PC-3 (cell line): ENCODE measurements at regions of chr5 and their contacts with region 1.

Region 1: DNA sequence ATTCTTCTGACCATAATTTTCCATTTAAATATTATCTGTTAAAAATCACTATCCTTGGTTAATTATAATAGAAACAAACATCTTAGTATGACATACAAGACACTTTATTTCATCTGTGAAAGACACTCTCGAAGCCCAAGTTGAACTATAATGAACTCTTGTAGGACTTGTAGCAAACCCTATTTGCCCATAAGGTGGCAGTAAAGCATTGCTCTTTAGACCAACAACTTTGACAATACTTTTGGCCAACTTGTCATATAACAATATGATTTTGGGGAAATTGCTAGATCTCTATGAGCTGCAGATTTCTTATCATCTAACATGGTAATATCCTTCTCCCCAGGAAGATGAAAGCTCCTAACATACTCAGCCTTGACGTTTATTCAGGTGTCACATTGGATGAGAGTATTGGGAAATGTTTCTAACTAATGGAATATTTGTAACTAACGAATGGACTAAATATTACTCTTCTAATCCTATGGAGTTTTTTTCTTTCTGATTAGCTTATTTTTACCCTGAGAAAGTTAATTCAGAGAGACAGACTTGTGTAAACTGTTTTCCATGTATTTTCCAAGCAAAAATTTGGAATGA is 11.0 kb downstream of the SPINK14 start:
- DNase-seq: peak; percentile 85
- ATAC-seq: peak; percentile 72; the same call in 1 of the 2 replicates
- H3K4me3 ChIP-seq: no peak overlapping the region
- H3K27ac ChIP-seq: no peak overlapping the region
- H3K4me1 ChIP-seq: no peaks in the 10 kb centered on the region
- H3K27me3 ChIP-seq: no peaks in the 10 kb centered on the region
- CTCF ChIP-seq: peak; percentile 96

Region 2: GRCh38 chr5:148120317-148120716 is 59.0 kb before region 1 on chr5:
- CTCF ChIA-PET with region 1: no interaction called
- POLR2A ChIA-PET with region 1: no interaction called
- intact Hi-C with region 1: loop called (anchors 2 kb)
- DNase-seq: peak; percentile 50
- ATAC-seq: peak; percentile 60
- H3K4me3 ChIP-seq: 0 out of 2 replicates have a peak overlapping the region, but pooled peaks have one; percentile 20
- H3K27ac ChIP-seq: no peak overlapping the region
- H3K4me1 ChIP-seq: peaks cover 6% of the 10 kb centered on the region
- H3K27me3 ChIP-seq: no peaks in the 10 kb centered on the region
- CTCF ChIP-seq: no peak

Region 3: DNA sequence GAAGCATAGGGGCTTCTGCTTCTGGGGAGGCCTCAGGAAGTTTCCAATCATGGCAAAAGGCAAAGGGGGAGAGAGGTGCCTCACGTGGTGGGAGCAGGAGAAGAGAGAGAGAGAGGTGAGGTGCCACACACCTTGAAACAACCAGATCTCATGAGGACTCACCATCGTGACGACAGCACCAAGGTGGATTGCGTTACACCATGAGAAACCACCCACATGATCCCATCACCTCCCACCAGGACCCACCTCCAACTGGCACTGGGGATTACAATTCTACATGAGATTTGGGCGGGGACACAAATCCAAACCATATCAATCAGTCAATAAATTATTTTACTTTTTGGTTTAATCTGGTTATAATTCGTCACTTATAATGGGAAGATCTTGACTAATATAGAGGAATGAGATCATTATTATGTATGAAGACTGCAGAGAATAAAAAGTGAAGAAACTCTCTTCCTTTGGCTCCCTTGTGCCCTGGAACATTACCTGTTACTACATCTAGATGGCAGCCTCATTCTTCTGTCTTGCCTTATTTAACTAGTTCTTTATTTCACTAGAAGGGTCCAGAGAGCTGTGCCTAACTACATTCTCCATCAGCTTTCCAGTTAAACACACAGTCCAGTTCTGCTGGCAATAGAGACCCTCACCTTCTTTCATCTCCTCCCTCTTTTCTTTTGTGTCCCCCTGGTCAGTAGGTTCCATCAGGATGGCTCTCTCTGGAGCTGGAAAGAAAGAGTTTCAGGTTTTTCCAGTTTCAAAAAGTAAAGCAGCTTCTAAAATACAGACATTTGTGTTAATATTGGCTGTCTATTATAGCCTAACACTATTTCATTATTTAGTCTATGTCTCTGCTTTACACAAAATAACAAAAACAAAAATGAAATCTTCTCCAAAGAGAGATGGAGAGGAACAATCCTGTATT is 111.2 kb after region 1 on chr5:
- CTCF ChIA-PET with region 1: interaction called, 3 read pairs
- POLR2A ChIA-PET with region 1: no interaction called
- intact Hi-C with region 1: loop called (anchors 1 kb)
- DNase-seq: peak; percentile 66
- ATAC-seq: peak; percentile 90
- H3K4me3 ChIP-seq: no peak overlapping the region
- H3K27ac ChIP-seq: no peak overlapping the region
- H3K4me1 ChIP-seq: no peaks in the 10 kb centered on the region
- H3K27me3 ChIP-seq: no peaks in the 10 kb centered on the region
- CTCF ChIP-seq: peak; percentile 92

Region 4: GRCh38 chr5:148314204-148314603 is 134.9 kb after region 1 on chr5:
- CTCF ChIA-PET with region 1: interaction called, 5 read pairs
- POLR2A ChIA-PET with region 1: no interaction called
- intact Hi-C with region 1: loop called (anchors 2 kb)
- DNase-seq: peak; percentile 70
- ATAC-seq: peak; percentile 97
- H3K4me3 ChIP-seq: no peak overlapping the region
- H3K27ac ChIP-seq: no peak overlapping the region
- H3K4me1 ChIP-seq: peaks cover 10% of the 10 kb centered on the region; the same call in 1 of the 2 replicates
- H3K27me3 ChIP-seq: no peaks in the 10 kb centered on the region
- CTCF ChIP-seq: peak; percentile 64

Region 5: GRCh38 chr5:148374692-148375360 is 195.5 kb after region 1 on chr5:
- CTCF ChIA-PET with region 1: interaction called, 4 read pairs
- POLR2A ChIA-PET with region 1: no interaction called
- intact Hi-C with region 1: loop called (anchors 1 kb)
- DNase-seq: peak; percentile 85
- ATAC-seq: peak; percentile 73
- H3K4me3 ChIP-seq: no peak overlapping the region
- H3K27ac ChIP-seq: no peak overlapping the region
- H3K4me1 ChIP-seq: peaks cover 14% of the 10 kb centered on the region
- H3K27me3 ChIP-seq: no peaks in the 10 kb centered on the region
- CTCF ChIP-seq: peak; percentile 98